ENCODE measurements at regions of chr5 and their contacts with region 1.

Region 1: GRCh38 chr5:160021831-160022446 is 13.0 kb downstream of the TTC1 start:
- DNase-seq: peak; percentile 28
- ATAC-seq: peak; percentile 99
- H3K4me3 ChIP-seq: no peak overlapping the region
- H3K27ac ChIP-seq: no peak overlapping the region
- H3K4me1 ChIP-seq: no peaks in the 10 kb centered on the region
- H3K27me3 ChIP-seq: no peaks in the 10 kb centered on the region
- CTCF ChIP-seq: peak; percentile 70 to 83 (median 73)
- EP300 ChIP-seq: no peak
- POLR2A ChIP-seq: no peak
- RAD21 ChIP-seq: peak; percentile 82

Region 2: DNA sequence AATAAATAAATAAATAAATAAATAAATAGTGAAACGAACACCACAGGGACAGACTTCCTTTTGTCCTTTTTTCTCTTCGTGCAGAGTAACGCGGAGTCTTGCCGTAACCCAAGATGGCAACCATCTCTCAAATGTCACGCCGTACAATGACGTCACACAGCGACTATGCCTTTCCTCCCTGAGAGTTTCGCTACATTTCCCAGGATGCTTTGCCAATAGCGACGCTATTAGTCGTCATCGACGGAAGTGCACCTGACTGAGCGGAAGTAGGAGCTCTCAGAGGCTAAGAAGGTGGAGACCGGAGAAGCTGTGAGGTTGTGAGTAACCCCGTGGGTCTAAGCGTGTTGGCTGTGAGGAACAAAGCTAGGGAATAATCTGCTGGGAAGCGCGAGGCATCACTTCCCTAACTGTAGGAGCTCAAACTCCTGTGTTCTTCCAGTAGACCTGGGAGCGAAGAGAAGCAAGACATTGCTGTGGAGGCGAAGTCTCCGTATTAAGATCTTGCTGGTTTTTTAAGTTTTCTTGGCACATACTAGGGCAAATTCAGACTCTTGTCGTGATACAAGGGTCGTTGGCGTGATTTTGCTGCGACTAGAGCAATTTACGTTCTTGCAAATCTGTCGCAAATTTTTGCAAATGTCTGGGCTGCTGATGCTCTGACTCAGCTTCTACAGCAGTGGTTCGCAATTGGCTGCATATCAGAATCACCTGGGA is 12.9 kb before region 1 on chr5 and contains the start of gene TTC1:
- CTCF ChIA-PET with region 1: interaction called, 63 read pairs
- POLR2A ChIA-PET with region 1: interaction called, 4 read pairs
- RAD21 ChIA-PET with region 1: interaction called, 10 read pairs
- SMC1A ChIA-PET with region 1: interaction called, 18 read pairs
- in situ Hi-C with region 1: no loop called
- intact Hi-C with region 1: no loop called
- DNase-seq: peak; percentile 98
- ATAC-seq: peak; percentile 98
- H3K4me3 ChIP-seq: peak within 1 kb of the TSS; percentile 86
- H3K27ac ChIP-seq: peak within 1 kb of the TSS; percentile 81
- H3K4me1 ChIP-seq: no peaks in the 10 kb centered on the region
- H3K27me3 ChIP-seq: no peaks in the 10 kb centered on the region
- CTCF ChIP-seq: no peak
- EP300 ChIP-seq: peak in 1 of 2 experiments; percentile 52; a peak in 1 of 4 replicates
- POLR2A ChIP-seq: peak; percentile 96
- RAD21 ChIP-seq: no peak
- polyA plus RNA-seq, gene TTC1: 132 to 160 TPM

Region 3: DNA sequence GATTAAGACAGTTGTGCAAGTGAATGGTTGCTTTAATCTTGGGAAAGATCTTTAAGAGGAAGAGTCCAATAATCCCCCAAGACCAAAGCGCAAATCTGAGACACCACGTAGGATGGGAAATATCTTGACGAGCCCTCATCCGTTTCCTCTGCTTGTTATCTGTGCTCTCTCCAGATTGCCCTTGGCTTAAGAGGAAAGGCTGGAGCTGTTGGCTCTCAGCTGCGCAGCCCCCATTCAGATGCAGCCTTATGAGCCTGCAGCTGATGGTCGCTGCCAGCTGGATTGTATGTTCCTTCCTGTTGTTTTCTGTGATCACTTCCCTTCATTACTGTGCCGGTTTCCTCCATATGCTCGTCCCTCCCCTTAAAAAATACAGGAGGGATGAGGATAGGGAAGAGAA is 49.6 kb after region 1 on chr5:
- CTCF ChIA-PET with region 1: interaction called, 13 read pairs
- POLR2A ChIA-PET with region 1: interaction called, 3 read pairs
- RAD21 ChIA-PET with region 1: no interaction called
- SMC1A ChIA-PET with region 1: interaction called, 8 read pairs
- in situ Hi-C with region 1: no loop called
- intact Hi-C with region 1: no loop called
- DNase-seq: no peak
- ATAC-seq: no peak
- H3K4me3 ChIP-seq: no peak overlapping the region
- H3K27ac ChIP-seq: no peak overlapping the region
- H3K4me1 ChIP-seq: no peaks in the 10 kb centered on the region
- H3K27me3 ChIP-seq: no peaks in the 10 kb centered on the region
- CTCF ChIP-seq: no peak
- EP300 ChIP-seq: no peak
- POLR2A ChIP-seq: no peak
- RAD21 ChIP-seq: no peak

Region 4: GRCh38 chr5:160105686-160106360 is 83.9 kb after region 1 on chr5:
- CTCF ChIA-PET with region 1: interaction called, 8 read pairs
- POLR2A ChIA-PET with region 1: no interaction called
- RAD21 ChIA-PET with region 1: interaction called, 4 read pairs
- SMC1A ChIA-PET with region 1: interaction called, 24 read pairs
- in situ Hi-C with region 1: no loop called
- intact Hi-C with region 1: no loop called
- DNase-seq: peak; percentile 61
- ATAC-seq: peak; percentile 89
- H3K4me3 ChIP-seq: no peak overlapping the region
- H3K27ac ChIP-seq: peak overlapping the region; percentile 56
- H3K4me1 ChIP-seq: peaks cover 17% of the 10 kb centered on the region
- H3K27me3 ChIP-seq: no peaks in the 10 kb centered on the region
- CTCF ChIP-seq: no peak
- EP300 ChIP-seq: no peak
- POLR2A ChIP-seq: no peak
- RAD21 ChIP-seq: no peak

Region 5: DNA sequence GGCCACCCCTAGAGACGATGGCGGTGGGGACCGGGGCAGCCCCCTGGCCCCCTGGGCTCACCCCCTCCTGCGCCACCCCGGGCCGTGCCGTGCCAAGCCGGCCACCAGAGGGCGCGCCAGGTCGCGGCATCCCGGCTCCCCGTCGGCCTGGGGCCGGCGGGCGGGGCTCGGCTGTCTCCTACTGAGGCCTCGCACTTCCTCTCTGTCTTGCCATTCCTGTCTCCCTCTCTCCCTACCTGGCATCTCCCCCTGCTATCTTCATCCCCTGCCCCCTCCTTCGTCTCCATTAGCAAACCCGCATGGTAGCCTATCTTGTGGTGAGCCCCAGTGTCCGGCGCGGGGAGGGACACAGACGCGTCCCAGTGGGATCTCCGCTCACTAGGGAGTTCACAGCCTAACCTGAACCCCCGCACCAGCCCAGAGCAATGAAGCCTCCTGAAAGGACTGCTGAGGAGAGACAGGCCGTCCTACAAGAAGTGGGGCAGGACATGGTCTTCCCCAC is 177.5 kb after region 1 on chr5:
- CTCF ChIA-PET with region 1: interaction called, 25 read pairs
- POLR2A ChIA-PET with region 1: no interaction called
- RAD21 ChIA-PET with region 1: interaction called, 5 read pairs
- SMC1A ChIA-PET with region 1: interaction called, 17 read pairs
- in situ Hi-C with region 1: no loop called
- intact Hi-C with region 1: loop called (anchors 5 kb)
- DNase-seq: no peak
- ATAC-seq: peak; percentile 99
- H3K4me3 ChIP-seq: peak overlapping the region; percentile 45; the same call in 1 of the 2 replicates
- H3K27ac ChIP-seq: no peak overlapping the region
- H3K4me1 ChIP-seq: peaks cover 8% of the 10 kb centered on the region; the same call in 1 of the 2 replicates
- H3K27me3 ChIP-seq: no peaks in the 10 kb centered on the region
- CTCF ChIP-seq: peak; percentile 74 to 85 (median 83); a peak in 5 of 6 replicates
- EP300 ChIP-seq: no peak
- POLR2A ChIP-seq: no peak
- RAD21 ChIP-seq: peak; percentile 90

Region 6: GRCh38 chr5:160390787-160391696 is 369.1 kb after region 1 on chr5:
- CTCF ChIA-PET with region 1: interaction called, 101 read pairs
- POLR2A ChIA-PET with region 1: interaction called, 3 read pairs
- RAD21 ChIA-PET with region 1: interaction called, 19 read pairs
- SMC1A ChIA-PET with region 1: interaction called, 28 read pairs
- in situ Hi-C with region 1: no loop called
- intact Hi-C with region 1: loop called (anchors 1 kb)
- DNase-seq: no peak
- ATAC-seq: peak; percentile 69
- H3K4me3 ChIP-seq: no peak overlapping the region
- H3K27ac ChIP-seq: no peak overlapping the region
- H3K4me1 ChIP-seq: no peaks in the 10 kb centered on the region
- H3K27me3 ChIP-seq: no peaks in the 10 kb centered on the region
- CTCF ChIP-seq: peak; percentile 22 to 62 (median 30); a peak in 4 of 6 replicates
- EP300 ChIP-seq: no peak
- POLR2A ChIP-seq: no peak
- RAD21 ChIP-seq: peak; percentile 37; the same call in 1 of the 2 replicates

Region 7: GRCh38 chr5:160418561-160419457 is 396.9 kb after region 1 on chr5 and contains the start of gene SLU7:
- CTCF ChIA-PET with region 1: interaction called, 6 read pairs
- POLR2A ChIA-PET with region 1: interaction called, 10 read pairs
- RAD21 ChIA-PET with region 1: no interaction called
- SMC1A ChIA-PET with region 1: interaction called, 4 read pairs
- in situ Hi-C with region 1: no loop called
- intact Hi-C with region 1: no loop called
- DNase-seq: peak; percentile 91
- ATAC-seq: peak; percentile 80
- H3K4me3 ChIP-seq: peak within 1 kb of the TSS; percentile 72
- H3K27ac ChIP-seq: peak within 1 kb of the TSS; percentile 71
- H3K4me1 ChIP-seq: peaks cover 15% of the 10 kb centered on the region
- H3K27me3 ChIP-seq: no peaks in the 10 kb centered on the region
- CTCF ChIP-seq: no peak
- EP300 ChIP-seq: no peak; a peak in 1 of 4 replicates
- POLR2A ChIP-seq: peak; percentile 86
- RAD21 ChIP-seq: no peak
- polyA plus RNA-seq, gene SLU7: 40.9 to 41.2 TPM

Measured in GM12878 (cell line).